ENCODE measurements at regions of chr1 and their contacts with region 1.

Region 1: GRCh38 chr1:20767271-20767670 is 19.8 kb downstream of the HP1BP3 start:
- DNase-seq: no peak
- H3K4me3 ChIP-seq: no peak overlapping the region
- H3K27ac ChIP-seq: no peak overlapping the region
- H3K4me1 ChIP-seq: no peaks in the 10 kb centered on the region
- H3K27me3 ChIP-seq: no peaks in the 10 kb centered on the region
- CTCF ChIP-seq: no peak
- POLR2A ChIP-seq: no peak

Region 2: GRCh38 chr1:20850021-20850420 is 82.8 kb after region 1 on chr1:
- intact Hi-C with region 1: loop called in 1 of 2 experiments (anchors 10 kb)
- DNase-seq: no peak
- H3K4me3 ChIP-seq: no peak overlapping the region
- H3K27ac ChIP-seq: no peak overlapping the region
- H3K4me1 ChIP-seq: no peaks in the 10 kb centered on the region
- H3K27me3 ChIP-seq: no peaks in the 10 kb centered on the region
- CTCF ChIP-seq: no peak
- POLR2A ChIP-seq: no peak

Region 3: GRCh38 chr1:21152423-21153100 is 385.3 kb after region 1 on chr1:
- intact Hi-C with region 1: no loop called
- DNase-seq: peak in 3 of 7 donors; percentile 19 to 25 (median 23)
- H3K4me3 ChIP-seq: no peak overlapping the region
- H3K27ac ChIP-seq: no peak overlapping the region
- H3K4me1 ChIP-seq: peaks cover 0 to 29% of the 10 kb centered on the region in 2 donors
- H3K27me3 ChIP-seq: no peaks in the 10 kb centered on the region
- CTCF ChIP-seq: no peak
- POLR2A ChIP-seq: no peak

Measured in adrenal gland (tissue), 19 donors.